Common myeloid progenitor, CD34-positive (primary cell): ENCODE measurements at regions of chr14 and their contacts with region 1.

Region 1: DNA sequence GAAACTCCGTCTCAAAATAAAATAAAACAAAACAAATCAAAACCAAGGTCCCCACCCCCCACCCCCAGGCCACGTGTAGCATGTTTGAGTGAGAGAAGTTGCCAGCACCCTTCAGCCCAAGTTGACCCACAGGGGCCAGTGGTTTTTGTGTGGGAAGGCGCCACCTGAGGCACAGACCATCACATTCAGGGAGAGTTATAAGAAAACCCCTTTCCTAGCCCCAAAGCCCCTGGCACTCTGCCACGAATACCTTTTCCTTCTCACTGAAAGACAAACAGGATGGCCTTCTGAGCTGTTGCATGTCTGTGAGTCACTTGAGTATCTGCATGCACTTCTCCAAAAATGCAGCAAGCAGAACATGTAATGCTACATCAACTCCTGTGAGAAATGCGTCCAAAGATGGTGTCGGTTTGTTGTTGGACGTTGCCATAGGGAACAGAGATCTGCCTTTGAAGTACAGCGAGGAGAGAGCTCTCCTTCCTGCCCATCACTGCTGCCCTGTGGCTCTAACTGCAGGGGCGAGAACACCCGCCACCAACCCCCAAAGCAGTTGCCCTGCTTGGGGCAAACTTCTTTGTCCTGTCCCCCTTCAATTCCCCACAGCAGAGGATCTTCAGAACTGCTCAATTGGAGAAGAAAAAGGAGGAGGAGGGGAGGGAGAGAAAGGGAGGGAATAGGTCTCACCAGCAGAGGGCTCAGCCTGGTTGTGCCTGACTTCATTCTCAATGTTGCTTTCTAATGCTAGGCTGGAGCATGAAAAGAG is 2.7 kb upstream of the TRAF3 start:
- DNase-seq: peak; percentile 77 to 90 (median 89)
- H3K4me3 ChIP-seq: no peak overlapping the region
- H3K27ac ChIP-seq: no peak overlapping the region
- H3K4me1 ChIP-seq: peaks cover 9 to 29% (median 21%) of the 10 kb centered on the region in 4 experiments
- H3K27me3 ChIP-seq: no peaks in the 10 kb centered on the region

Region 2: DNA sequence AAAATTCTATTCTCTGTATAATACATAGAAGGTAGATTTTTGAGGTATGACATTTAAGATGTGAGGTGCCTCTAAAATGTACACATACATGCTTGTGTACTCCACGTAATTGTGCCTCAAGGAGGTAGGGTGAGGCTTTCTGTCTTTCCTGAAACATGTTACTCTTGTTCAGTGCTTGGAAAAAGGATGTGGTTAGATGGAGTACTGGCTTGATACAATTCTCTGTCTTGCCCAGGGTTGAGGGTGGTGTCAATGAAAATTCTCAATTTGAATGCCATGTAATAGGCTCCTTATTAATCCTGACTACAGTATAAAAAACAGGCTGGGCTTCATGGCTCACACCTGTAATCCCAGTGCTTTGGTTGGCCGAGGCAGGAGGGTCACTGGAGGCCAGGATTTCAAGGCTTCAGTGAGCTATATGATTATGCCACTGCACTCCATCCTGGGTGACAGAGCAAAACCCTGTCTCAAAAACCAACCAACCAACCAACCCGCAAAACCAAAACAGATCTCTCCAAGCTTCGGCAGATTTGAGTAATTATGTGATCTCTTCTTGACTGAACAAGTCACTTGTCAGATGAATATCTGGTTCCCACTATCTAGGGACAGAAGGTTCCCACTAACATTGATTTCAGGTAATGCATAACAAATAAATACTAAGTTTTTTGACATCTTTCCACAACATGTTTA is 140.5 kb before region 1 on chr14:
- CTCF ChIA-PET with region 1: no interaction called
- POLR2A ChIA-PET with region 1: interaction called, 10 read pairs
- DNase-seq: no peak
- H3K4me3 ChIP-seq: no peak overlapping the region
- H3K27ac ChIP-seq: no peak overlapping the region
- H3K4me1 ChIP-seq: peaks cover 5 to 17% (median 10%) of the 10 kb centered on the region in 4 experiments
- H3K27me3 ChIP-seq: no peaks in the 10 kb centered on the region

Region 3: GRCh38 chr14:102694530-102695166 is 79.9 kb before region 1 on chr14:
- CTCF ChIA-PET with region 1: interaction called, 14 read pairs
- POLR2A ChIA-PET with region 1: no interaction called
- DNase-seq: peak; percentile 69 to 85 (median 79)
- H3K4me3 ChIP-seq: no peak overlapping the region
- H3K27ac ChIP-seq: no peak overlapping the region
- H3K4me1 ChIP-seq: peaks cover 6 to 17% (median 7%) of the 10 kb centered on the region in 4 experiments
- H3K27me3 ChIP-seq: no peaks in the 10 kb centered on the region

Region 4: GRCh38 chr14:102917469-102918211 is 143.1 kb after region 1 on chr14:
- CTCF ChIA-PET with region 1: interaction called, 13 read pairs
- POLR2A ChIA-PET with region 1: no interaction called
- DNase-seq: peak; percentile 40 to 66 (median 63)
- H3K4me3 ChIP-seq: no peak overlapping the region
- H3K27ac ChIP-seq: no peak overlapping the region
- H3K4me1 ChIP-seq: peaks cover 0 to 13% (median 4%) of the 10 kb centered on the region in 4 experiments
- H3K27me3 ChIP-seq: peaks cover 5 to 27% (median 9%) of the 10 kb centered on the region in 5 experiments